Activated naive CD4-positive, alpha-beta T cell treated with anti-CD3 and anti-CD28 coated beads for 36 hours (primary cell): ENCODE measurements at regions of chr6 and their contacts with region 1.

Region 1: DNA sequence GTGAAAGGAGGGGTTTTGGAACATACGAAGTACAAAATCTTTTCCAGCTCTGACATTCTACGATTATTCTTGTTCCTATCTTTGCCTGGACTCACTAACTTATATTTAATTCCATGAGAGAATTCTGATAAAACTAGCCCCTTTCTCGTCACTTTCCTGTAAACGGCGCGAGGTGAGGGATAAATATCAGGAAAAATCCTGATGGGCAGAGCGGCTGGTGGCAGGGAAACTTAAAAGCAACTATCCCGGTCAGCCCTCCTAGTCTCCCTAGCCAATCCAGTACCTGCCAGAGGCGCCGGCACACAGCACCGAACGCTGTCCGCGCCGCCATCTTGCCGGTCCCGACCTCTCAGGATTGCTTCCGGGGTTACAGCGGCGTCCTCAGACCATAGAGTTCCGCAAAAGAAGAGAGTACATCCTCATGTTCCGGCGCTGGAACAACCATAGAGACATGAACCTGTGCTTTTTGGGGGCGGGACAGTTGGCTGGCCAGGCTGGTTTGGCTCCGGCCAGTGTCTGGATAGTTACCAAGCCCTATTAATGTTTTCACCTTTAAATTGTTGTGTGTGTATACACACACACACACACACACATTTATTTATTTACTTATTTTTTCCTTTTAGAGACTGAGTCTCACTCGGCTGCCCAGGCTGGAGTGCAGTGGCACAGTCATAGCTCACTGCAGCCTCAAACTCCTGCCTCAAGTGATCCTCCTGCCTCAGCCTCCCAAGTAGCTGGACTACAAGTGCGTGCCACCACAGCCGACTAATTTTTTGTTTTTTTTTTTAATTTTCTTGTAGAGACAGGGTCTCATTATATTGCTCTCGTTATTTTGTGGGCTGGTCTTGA is at the start of gene MRPS10:
- DNase-seq: peak; percentile 96
- H3K4me3 Mint-ChIP-seq: peak within 1 kb of the TSS; percentile 94
- H3K27ac Mint-ChIP-seq: peak within 1 kb of the TSS; percentile 88
- H3K4me1 Mint-ChIP-seq: peaks cover 37% of the 10 kb centered on the region
- H3K27me3 Mint-ChIP-seq: no peaks in the 10 kb centered on the region
- total RNA-seq, gene MRPS10: 39.7 to 40.7 TPM

Region 2: GRCh38 chr6:41787219-41787917 is 430.4 kb before region 1 on chr6 and contains the start of gene TOMM6:
- CTCF ChIA-PET with region 1: interaction called, 6 read pairs
- intact Hi-C with region 1: loop called (anchors 2 kb)
- DNase-seq: peak; percentile 97
- H3K4me3 Mint-ChIP-seq: peak within 1 kb of the TSS; percentile 92
- H3K27ac Mint-ChIP-seq: peak within 1 kb of the TSS; percentile 94
- H3K4me1 Mint-ChIP-seq: peaks cover 24% of the 10 kb centered on the region
- H3K27me3 Mint-ChIP-seq: no peaks in the 10 kb centered on the region
- total RNA-seq, gene TOMM6: 285 to 299 TPM

Region 3: GRCh38 chr6:42104095-42104806 is 113.5 kb before region 1 on chr6:
- CTCF ChIA-PET with region 1: interaction called, 5 read pairs
- intact Hi-C with region 1: loop called (anchors 2 kb)
- DNase-seq: peak; percentile 87
- H3K4me3 Mint-ChIP-seq: peak overlapping the region; percentile 65
- H3K27ac Mint-ChIP-seq: no peak overlapping the region
- H3K4me1 Mint-ChIP-seq: peaks cover 21% of the 10 kb centered on the region
- H3K27me3 Mint-ChIP-seq: no peaks in the 10 kb centered on the region

Region 4: DNA sequence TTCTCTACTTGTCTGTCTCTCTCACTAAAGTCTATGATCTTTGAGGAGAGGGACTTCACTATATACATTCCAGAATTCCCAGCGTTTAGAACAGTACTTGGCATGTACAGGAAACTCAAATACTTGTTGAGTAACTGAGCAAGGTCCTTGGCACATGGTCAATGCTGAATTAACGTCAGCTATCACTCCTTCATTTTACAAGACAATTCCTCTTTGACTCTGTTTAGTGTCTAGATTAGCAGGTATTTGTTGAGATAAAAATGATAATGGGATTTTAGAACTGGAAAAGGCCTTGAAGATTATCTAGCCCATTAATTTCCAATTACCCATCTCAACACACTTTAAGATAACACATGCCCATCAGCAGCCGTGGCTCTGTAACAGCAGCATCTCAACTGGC is 16.4 kb before region 1 on chr6:
- CTCF ChIA-PET with region 1: interaction called, 17 read pairs
- intact Hi-C with region 1: no loop called
- DNase-seq: no peak
- H3K4me3 Mint-ChIP-seq: no peak overlapping the region
- H3K27ac Mint-ChIP-seq: no peak overlapping the region
- H3K4me1 Mint-ChIP-seq: no peaks in the 10 kb centered on the region
- H3K27me3 Mint-ChIP-seq: no peaks in the 10 kb centered on the region

Region 5: DNA sequence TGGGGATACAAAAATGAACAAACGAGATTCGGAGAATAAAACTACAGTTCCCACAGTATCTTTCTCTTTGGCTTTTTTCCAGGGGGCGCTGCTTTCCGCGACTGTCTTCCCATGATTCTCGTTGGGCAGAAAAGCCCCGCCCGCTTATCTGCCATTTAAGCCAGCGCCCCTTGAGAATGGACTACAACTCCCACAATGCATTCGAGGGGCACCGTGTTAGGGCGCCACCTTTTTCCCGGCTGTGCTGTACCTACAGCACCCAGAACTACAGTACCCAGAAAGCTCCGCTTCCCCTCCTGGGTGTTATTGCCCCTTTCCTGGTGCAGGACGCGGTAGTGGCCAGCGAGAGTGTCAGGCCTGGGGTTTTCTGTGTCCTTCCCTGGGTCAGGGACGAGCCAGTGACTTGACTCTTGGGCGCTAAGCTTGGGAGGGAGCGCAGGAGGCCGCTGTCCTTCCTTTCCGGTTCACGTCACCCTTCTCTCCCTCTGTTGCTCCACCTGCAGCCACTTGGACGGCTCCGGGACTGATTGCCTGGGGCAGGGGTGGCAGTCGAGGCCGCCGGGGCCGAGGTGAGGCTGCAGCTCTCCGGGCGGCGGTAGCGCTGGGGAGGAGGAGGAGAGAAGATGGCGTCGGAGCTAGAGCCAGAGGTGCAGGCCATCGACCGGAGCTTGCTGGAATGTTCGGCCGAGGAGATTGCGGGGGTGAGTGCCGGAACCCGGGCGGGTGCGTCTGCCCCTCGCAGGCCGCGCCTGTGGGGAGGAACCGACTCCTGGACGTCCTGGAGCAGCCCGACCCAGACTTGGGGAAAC is 346.2 kb after region 1 on chr6 and contains the start of gene UBR2:
- CTCF ChIA-PET with region 1: interaction called, 3 read pairs
- intact Hi-C with region 1: loop called (anchors 1 kb)
- DNase-seq: peak; percentile 98
- H3K4me3 Mint-ChIP-seq: peak within 1 kb of the TSS; percentile 97
- H3K27ac Mint-ChIP-seq: peak within 1 kb of the TSS; percentile 92
- H3K4me1 Mint-ChIP-seq: peaks cover 26% of the 10 kb centered on the region
- H3K27me3 Mint-ChIP-seq: no peaks in the 10 kb centered on the region
- total RNA-seq, gene UBR2: 23.1 to 23.5 TPM

Region 6: DNA sequence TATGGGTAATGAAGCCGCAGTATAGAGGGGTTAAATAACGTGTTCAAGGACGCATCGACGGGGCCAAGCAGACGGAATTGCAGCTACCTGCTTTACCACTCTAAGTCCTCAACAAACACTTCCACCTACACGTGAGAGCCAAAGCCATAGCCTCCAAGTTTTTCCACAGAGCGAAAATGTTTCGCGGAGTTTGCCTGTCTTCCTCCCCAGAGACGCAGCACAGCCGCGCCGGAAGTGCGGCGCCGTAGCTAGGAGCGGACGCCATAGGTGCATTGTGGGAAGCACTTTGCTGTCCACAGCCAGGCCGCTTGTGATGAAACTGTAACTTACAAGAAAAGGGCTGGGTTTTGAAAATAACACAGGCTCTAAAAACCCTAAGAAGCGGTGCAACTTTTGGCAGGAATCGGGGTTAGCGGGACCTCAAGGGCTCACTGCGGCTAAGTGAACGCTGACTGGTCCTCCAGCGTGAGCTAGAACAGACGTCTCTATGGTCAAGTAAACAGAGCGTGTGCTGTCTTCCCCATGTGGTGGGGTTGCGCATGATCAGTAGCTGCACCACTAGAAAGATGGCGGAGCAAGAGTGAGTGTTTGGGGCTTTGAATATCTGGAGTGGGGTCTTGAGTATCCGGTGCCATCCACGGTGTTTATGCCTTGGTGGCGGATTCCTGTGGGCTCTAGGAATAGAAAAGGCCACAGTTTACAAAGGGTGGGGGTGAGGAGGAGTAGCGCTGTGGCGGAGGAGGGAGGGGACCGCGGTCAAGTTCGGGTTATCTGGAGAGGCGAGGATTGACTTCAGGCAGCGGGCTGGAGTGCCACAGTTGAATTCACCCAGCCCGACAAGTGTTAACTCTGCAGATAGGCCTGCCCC is 661.9 kb after region 1 on chr6 and contains the start of gene RPL7L1:
- CTCF ChIA-PET with region 1: no interaction called
- intact Hi-C with region 1: loop called (anchors 2 kb)
- DNase-seq: peak; percentile 87
- H3K4me3 Mint-ChIP-seq: peak within 1 kb of the TSS; percentile 98
- H3K27ac Mint-ChIP-seq: peak within 1 kb of the TSS; percentile 99
- H3K4me1 Mint-ChIP-seq: peaks cover 23% of the 10 kb centered on the region
- H3K27me3 Mint-ChIP-seq: no peaks in the 10 kb centered on the region
- total RNA-seq, gene RPL7L1: 99.0 to 101 TPM